Right ventricle myocardium superior (tissue), 1 donor: ENCODE measurements at regions of chr14 and their contacts with region 1.

Region 1: DNA sequence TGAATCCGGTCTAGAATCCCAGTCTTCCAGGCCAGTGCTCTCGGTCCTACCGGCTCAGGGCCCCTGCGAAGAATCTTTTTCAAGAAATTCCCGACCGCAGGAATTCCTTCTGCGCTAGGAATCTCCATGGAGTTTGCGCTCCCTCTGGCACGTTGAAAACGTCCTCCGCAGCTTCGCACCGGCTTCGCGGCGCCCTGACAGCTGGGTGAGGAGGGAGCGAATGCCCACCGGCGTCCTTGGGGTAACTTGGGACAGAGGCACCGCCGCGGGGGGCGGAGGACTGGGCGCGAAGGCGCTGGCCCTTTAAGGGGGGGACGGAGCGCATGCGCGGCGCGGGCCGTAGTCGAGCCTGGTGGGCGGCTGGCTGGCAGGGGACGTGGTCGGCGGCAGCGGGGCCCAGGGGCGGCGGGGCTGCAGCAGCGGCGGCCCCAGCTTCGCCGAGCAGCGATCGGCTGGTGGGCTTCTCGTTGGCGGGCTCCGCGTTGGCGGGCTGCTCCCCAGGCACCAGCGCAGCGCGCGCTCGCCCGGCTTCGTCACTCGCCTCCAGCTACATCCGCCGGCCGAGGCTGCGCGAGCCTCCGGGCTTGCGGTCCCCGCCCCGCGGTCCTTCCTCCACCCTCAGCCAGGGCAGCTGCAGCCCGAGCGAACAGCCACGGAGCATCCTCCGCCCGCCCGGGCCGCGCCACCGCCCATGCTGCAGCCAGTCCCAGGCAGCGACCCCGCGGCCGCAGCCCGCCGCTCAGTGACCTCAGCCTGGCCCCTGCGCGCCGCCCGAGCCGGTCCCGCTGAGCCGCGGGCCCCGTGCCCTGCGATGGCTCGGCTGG is at the start of gene VASH1:
- DNase-seq: peak; percentile 88
- ATAC-seq: peak; percentile 88
- total RNA-seq, gene VASH1: 14.3 TPM

Region 2: DNA sequence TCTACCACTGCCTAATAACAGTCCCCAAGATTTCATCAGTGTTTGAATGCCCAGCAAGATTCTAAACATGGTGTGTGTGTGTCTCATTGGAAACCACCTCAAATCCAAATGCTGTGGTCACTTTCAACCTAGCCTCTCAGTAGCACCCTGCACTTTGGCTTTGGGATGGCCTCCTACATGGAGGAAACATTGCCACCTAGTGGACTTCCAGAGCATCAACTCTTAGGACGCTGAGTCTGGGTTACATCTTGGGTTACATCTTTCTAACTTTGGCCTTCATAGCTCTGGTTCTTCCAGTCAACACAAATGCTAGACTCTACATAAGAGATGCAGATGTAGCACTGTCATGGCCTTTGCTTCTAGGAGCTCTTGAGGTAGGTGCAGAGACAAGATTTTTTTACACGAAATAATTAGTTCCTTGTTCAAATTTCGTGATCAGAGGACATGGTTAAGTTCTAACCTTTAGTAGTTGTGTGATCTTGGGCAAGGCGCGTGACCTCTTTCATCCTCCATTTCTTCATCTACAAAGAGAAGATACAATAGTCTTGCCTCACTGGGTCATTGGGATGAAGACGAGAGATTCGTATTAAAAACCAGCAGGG is 113.5 kb before region 1 on chr14:
- intact Hi-C with region 1: no loop called
- DNase-seq: no peak
- ATAC-seq: peak; percentile 68

Region 3: DNA sequence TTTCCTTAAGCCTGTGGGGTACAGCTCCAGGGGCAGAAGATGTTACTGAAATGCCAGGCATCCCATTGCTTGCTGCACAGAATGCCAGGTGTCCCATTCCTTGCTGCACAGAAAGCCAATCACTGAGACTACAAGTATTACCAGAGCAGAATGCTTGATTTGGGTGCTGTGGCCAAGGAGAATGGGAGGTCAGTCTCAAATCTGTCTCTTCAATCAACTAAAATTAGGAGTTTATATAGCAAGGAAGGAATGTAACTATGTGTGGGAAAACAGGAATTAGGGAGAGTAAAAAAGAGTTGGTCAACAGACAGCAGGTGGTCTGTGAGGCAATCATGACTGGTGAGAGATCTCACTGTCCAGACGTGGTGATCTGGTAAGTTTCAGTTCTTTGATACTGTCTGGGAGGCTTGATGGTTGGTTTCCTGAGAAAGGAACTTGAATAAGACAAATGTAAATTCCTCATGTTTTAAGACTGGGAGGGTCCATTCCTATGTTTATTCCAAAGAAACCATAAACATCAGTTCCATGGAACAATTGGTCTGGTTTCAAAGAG is 31.3 kb before region 1 on chr14:
- intact Hi-C with region 1: loop called (anchors 5 kb)
- DNase-seq: no peak
- ATAC-seq: no peak

Region 4: GRCh38 chr14:76844223-76844622 is 82.9 kb after region 1 on chr14:
- intact Hi-C with region 1: no loop called
- DNase-seq: peak; percentile 85
- ATAC-seq: peak; percentile 87

Region 5: DNA sequence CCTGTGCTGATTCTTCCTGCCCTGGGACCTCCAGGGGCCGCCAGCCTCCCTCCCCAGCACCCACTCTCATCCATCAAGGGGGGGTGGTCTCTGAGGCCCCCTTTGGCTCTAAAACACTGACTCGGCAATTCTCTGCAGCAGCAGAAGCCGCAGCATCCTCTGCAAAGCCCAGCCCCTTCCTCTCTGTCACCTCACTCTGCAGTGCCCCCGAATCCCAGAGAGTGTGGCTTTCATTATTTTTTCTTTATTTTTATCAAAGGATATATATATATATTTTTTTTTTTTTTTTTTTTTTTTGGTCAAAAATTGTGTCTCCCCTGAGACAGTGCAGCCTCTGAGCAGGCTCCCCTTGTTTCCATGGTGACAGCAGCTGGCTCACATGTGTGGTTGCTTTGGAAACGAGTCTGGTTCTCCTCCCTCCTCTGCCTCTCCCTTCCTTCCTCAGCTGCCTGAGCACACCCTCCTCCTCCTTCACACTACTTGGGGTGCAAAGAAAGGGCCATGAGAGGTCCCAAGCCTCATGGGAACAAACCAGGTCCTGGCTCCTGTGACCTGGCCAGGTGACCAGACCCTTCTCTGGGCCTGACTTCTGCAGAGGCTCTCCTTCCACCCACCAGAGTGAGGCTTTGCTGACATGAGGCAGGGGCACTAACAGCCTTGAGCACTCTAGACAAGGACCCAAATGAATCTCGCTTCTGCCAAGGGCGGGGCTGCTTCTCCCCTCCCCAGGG is 165.3 kb after region 1 on chr14:
- intact Hi-C with region 1: no loop called
- DNase-seq: peak; percentile 79
- ATAC-seq: peak; percentile 74

Region 6: DNA sequence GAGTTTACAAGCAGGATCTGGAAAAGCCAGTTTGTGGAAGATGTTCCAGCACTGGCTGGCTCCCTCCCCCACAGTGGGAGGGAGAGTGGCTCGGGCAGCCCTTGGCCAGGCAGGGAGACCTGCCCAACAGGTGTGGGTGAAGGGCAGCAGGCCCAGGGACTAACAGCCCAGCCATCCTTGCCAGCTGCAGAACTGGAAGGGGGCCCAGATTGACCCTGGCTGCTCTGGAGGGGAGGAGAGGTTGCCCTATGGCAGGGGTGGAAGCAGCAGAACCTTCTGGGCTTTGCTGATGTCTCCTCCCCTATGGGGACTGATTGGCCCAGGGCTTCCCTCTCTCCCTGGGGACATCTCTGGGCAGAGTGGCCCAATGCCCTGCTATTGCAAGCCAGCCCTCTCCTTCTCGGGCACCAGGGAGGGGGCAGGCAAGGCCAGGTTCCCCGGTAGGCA is 246.7 kb after region 1 on chr14:
- intact Hi-C with region 1: no loop called
- DNase-seq: peak; percentile 84
- ATAC-seq: peak; percentile 89